Sigmoid colon (tissue), 7 donors: ENCODE measurements at regions of chr5 and their contacts with region 1.

Region 1: DNA sequence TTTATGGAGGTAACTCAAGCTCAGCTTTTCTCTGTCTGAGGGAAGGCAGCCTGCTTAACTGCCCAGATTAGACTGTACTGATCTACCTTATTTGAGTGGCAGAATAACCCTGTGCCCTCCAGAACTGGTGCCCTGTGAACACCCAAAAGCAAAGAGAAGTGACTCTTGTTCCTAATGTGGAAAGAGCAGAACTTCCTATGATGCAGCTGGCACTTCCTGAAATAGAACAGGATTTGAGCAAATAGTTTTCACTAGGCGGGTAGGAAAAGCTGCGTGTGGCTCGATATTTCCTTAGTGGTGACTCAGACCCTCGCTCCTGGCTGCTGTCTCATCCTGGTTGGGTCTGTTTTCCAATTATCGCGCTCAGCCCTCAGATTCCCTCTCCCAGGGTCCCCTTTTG is 89.9 kb downstream of the SH3TC2 start:
- DNase-seq: peak; percentile 71
- H3K4me3 ChIP-seq: no peak overlapping the region
- H3K27ac ChIP-seq: peak overlapping the region; percentile 9 to 56 (median 44)
- H3K4me1 ChIP-seq: peaks cover 0 to 53% (median 46%) of the 10 kb centered on the region in 4 donors
- H3K27me3 ChIP-seq: no peaks in the 10 kb centered on the region
- CTCF ChIP-seq: no peak
- EP300 ChIP-seq: no peak
- POLR2A ChIP-seq: no peak

Region 2: GRCh38 chr5:148897842-148898241 is 75.1 kb before region 1 on chr5:
- intact Hi-C with region 1: loop called (anchors 5 kb)
- DNase-seq: no peak
- H3K4me3 ChIP-seq: no peak overlapping the region
- H3K27ac ChIP-seq: peak overlapping the region in 2 of 4 donors; percentile 37 to 45
- H3K4me1 ChIP-seq: peaks cover 0 to 5% (median 0%) of the 10 kb centered on the region in 4 donors
- H3K27me3 ChIP-seq: no peaks in the 10 kb centered on the region
- CTCF ChIP-seq: no peak
- EP300 ChIP-seq: peak; percentile 52 to 93 (median 65)
- POLR2A ChIP-seq: no peak

Region 3: GRCh38 chr5:148924817-148925216 is 48.1 kb before region 1 on chr5:
- intact Hi-C with region 1: no loop called
- DNase-seq: no peak
- H3K4me3 ChIP-seq: no peak overlapping the region
- H3K27ac ChIP-seq: no peak overlapping the region
- H3K4me1 ChIP-seq: peaks cover 0 to 3% (median 0%) of the 10 kb centered on the region in 4 donors
- H3K27me3 ChIP-seq: no peaks in the 10 kb centered on the region
- CTCF ChIP-seq: no peak
- EP300 ChIP-seq: no peak
- POLR2A ChIP-seq: no peak

Region 4: GRCh38 chr5:149128023-149128875 is 155.3 kb after region 1 on chr5:
- intact Hi-C with region 1: no loop called
- DNase-seq: no peak
- H3K4me3 ChIP-seq: no peak overlapping the region
- H3K27ac ChIP-seq: no peak overlapping the region
- H3K4me1 ChIP-seq: no peaks in the 10 kb centered on the region
- H3K27me3 ChIP-seq: no peaks in the 10 kb centered on the region
- CTCF ChIP-seq: peak in 2 of 4 experiments; percentile 17 to 43
- EP300 ChIP-seq: no peak
- POLR2A ChIP-seq: no peak